PC-3 (cell line): ENCODE measurements at regions of chrX and their contacts with region 1.

Region 1: GRCh38 chrX:101287402-101287801 is 3.7 kb downstream of the TAF7L start:
- DNase-seq: peak; percentile 75
- ATAC-seq: peak; percentile 57; the same call in 1 of the 2 replicates
- H3K4me3 ChIP-seq: no peak overlapping the region
- H3K27ac ChIP-seq: no peak overlapping the region
- H3K4me1 ChIP-seq: no peaks in the 10 kb centered on the region
- H3K27me3 ChIP-seq: no peaks in the 10 kb centered on the region
- CTCF ChIP-seq: peak; percentile 61

Region 2: DNA sequence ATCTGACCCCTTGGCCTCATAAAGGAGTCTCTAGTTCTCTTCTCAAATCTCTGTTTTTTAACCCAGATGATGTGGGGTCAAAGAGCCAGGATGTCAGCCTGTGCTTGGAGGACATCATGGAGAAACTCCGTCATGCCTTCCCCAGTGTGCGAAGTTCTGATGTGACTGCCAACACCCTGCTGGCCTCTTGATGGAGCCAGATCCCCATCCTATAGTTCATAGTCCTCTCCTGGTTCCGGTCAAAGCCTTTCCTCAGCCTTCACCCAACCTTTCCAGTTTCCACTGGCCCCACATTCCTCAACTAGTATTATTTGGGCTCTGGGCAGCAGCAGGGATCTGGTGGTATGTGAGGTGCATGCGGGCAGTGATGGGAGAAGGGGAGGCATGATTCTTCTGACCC is 27.0 kb before region 1 on chrX:
- CTCF ChIA-PET with region 1: no interaction called
- POLR2A ChIA-PET with region 1: no interaction called
- intact Hi-C with region 1: loop called (anchors 1 kb)
- DNase-seq: peak; percentile 5
- ATAC-seq: peak; percentile 48; the same call in 1 of the 2 replicates
- H3K4me3 ChIP-seq: no peak overlapping the region
- H3K27ac ChIP-seq: no peak overlapping the region
- H3K4me1 ChIP-seq: no peaks in the 10 kb centered on the region
- H3K27me3 ChIP-seq: no peaks in the 10 kb centered on the region
- CTCF ChIP-seq: peak; percentile 54